A549 (cell line): ENCODE measurements at regions of chr11 and their contacts with region 1.

Region 1: GRCh38 chr11:107689317-107690202 is 22.3 kb downstream of the SLN start:
- DNase-seq: peak; percentile 34 to 47
- ATAC-seq: peak; percentile 90 to 94
- H3K4me3 ChIP-seq: no peak overlapping the region
- H3K27ac ChIP-seq: peak overlapping the region in 1 of 2 experiments; percentile 50; a peak in 2 of 6 replicates
- H3K4me1 ChIP-seq: peaks cover 20% of the 10 kb centered on the region; the same call in 1 of the 3 replicates
- CTCF ChIP-seq: peak; percentile 83
- EP300 ChIP-seq: no peak
- POLR2A ChIP-seq: no peak
- RAD21 ChIP-seq: peak; percentile 87 to 90

Region 2: GRCh38 chr11:107549253-107549953 is 140.2 kb before region 1 on chr11:
- CTCF ChIA-PET with region 1: interaction called, 36 read pairs
- POLR2A ChIA-PET with region 1: no interaction called
- DNase-seq: peak in 1 of 2 experiments; percentile 25
- ATAC-seq: 0 out of 6 replicates have a peak, but pooled peaks of 1 of the 2 experiments have one; percentile 44
- H3K4me3 ChIP-seq: no peak overlapping the region
- H3K27ac ChIP-seq: no peak overlapping the region
- H3K4me1 ChIP-seq: no peaks in the 10 kb centered on the region
- CTCF ChIP-seq: peak; percentile 73
- EP300 ChIP-seq: no peak
- POLR2A ChIP-seq: no peak
- RAD21 ChIP-seq: peak; percentile 76 to 77

Region 3: DNA sequence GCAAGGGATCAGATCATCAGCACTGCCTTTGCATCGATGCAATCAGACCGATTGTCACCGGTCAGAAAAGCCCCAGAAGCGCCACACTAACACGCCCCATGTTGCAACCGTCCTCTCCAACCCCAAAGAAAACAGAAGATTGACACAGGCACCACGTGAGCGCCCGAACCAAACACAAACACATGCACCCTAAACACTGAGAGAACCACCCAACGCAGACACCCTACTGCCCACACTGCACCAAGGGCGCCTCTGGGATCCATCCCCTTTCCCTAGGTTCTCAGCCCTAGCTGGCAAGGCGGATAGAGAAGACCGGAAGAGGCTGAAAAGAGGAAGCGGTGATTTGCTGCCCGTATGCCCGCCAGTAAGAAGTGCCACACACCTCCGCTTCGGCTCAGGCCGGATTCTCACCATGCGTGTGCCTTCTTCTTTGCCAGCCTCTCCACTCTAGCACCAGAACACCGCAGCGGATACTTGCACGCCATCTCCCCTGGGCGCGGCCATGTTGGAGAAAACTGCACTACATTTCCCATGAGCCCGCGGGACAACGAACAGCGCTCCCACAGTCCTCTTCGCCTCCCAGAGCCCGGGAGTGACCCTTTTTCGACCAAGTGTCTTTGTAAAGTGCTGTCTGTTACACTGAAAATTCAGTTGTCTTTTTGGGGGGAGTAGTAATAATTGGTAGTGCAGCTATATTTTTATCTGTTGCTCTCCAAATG is 124.2 kb before region 1 on chr11 and contains the start of gene ALKBH8:
- CTCF ChIA-PET with region 1: interaction called, 75 read pairs
- POLR2A ChIA-PET with region 1: no interaction called
- DNase-seq: peak; percentile 52 to 58
- ATAC-seq: peak; percentile 90 to 95
- H3K4me3 ChIP-seq: peak within 1 kb of the TSS; percentile 75
- H3K27ac ChIP-seq: peak within 1 kb of the TSS; percentile 89 to 94
- H3K4me1 ChIP-seq: peaks cover 47% of the 10 kb centered on the region
- CTCF ChIP-seq: no peak
- EP300 ChIP-seq: no peak
- POLR2A ChIP-seq: no peak; the same call in 1 of the 2 replicates
- RAD21 ChIP-seq: no peak
- polyA plus RNA-seq, gene ALKBH8: 7.1 and 10.8 TPM in 2 replicates

Region 4: GRCh38 chr11:107573438-107573837 is 116.1 kb before region 1 on chr11:
- CTCF ChIA-PET with region 1: interaction called, 75 read pairs
- POLR2A ChIA-PET with region 1: no interaction called
- DNase-seq: no peak
- ATAC-seq: no peak
- H3K4me3 ChIP-seq: no peak overlapping the region
- H3K27ac ChIP-seq: no peak overlapping the region
- H3K4me1 ChIP-seq: no peaks in the 10 kb centered on the region
- CTCF ChIP-seq: no peak
- EP300 ChIP-seq: no peak
- POLR2A ChIP-seq: no peak
- RAD21 ChIP-seq: no peak